ENCODE measurements at regions of chr12 and their contacts with region 1.

Region 1: DNA sequence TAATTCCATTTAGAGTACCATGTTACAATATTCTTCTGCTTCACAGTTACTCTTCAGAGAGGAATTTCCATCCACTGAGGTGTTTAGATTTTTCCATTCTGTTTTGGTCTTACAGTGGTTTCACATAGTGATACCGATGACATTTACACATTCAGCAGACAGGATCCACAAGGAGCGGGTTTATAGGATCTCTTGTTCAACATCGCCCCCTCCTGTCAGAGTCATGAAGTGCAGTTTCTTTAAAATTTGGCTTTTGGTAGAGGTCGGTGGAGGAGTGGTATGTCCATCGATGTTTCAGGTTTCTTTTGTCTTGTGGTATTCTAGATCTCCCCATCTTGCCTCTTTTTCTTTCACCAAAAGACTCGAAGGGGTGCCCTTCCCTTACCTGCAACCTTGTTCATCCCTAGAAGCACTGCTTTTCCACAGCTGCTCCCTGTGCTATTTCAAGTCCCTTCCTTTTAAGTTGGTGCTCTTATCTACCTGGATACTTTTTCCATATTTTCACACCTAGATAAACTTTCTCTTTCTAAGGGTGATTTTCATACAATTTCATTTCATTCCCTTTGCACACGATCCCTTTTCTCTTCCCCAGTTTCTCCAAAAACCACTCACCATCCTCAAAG is 181.3 kb downstream of the ITPR2 start:
- DNase-seq: peak; percentile 74
- H3K4me3 Mint-ChIP-seq: no peak overlapping the region
- H3K27ac Mint-ChIP-seq: no peak overlapping the region
- H3K4me1 Mint-ChIP-seq: peaks cover 27% of the 10 kb centered on the region
- H3K27me3 Mint-ChIP-seq: no peaks in the 10 kb centered on the region
- CTCF ChIP-seq: peak; percentile 85

Region 2: DNA sequence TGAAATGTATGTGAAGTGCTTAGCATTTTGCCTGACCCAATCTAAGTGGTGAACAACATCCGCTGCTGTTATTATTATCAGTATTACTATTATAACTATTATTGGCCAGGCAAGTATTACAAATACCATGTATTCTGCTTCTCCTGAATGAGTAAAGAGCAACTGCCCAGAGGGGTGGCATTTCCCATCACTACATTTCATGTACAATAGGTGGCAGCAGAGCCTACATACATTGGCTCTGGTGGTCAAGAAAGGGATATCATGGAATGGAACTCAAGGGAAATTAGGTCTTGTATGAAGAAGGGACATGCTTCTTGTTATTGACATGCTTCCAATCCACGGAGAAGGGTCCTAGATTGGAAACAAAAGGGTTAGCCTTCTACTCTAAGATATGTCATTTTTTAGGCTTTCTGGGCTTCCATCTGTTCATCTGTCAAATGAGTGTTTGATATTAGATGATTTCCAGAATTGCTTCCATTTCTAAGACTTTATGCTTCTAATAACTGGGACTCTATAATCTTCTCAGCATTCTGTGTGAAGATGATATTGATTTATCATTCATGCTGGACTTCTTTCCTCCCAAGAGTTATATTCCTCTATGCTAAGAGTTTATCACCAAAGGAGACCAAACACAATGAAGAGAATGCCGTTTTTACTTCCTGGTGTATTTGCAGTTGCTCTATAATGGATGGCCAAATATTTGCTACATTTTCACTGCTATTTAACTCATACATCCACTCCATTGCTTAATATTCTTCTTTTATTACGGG is 217.2 kb before region 1 on chr12:
- CTCF ChIA-PET with region 1: no interaction called
- intact Hi-C with region 1: loop called (anchors 1 kb)
- DNase-seq: peak; percentile 34
- H3K4me3 Mint-ChIP-seq: no peak overlapping the region
- H3K27ac Mint-ChIP-seq: no peak overlapping the region
- H3K4me1 Mint-ChIP-seq: peaks cover 11% of the 10 kb centered on the region
- H3K27me3 Mint-ChIP-seq: no peaks in the 10 kb centered on the region
- CTCF ChIP-seq: peak; percentile 78

Region 3: GRCh38 chr12:26455936-26456574 is 195.6 kb before region 1 on chr12:
- CTCF ChIA-PET with region 1: interaction called, 10 read pairs
- intact Hi-C with region 1: no loop called
- DNase-seq: no peak
- H3K4me3 Mint-ChIP-seq: no peak overlapping the region
- H3K27ac Mint-ChIP-seq: no peak overlapping the region
- H3K4me1 Mint-ChIP-seq: no peaks in the 10 kb centered on the region
- H3K27me3 Mint-ChIP-seq: peaks cover 17% of the 10 kb centered on the region
- CTCF ChIP-seq: no peak

Region 4: GRCh38 chr12:26629864-26630263 is 21.8 kb before region 1 on chr12:
- CTCF ChIA-PET with region 1: interaction called, 4 read pairs
- intact Hi-C with region 1: loop called (anchors 1 kb)
- DNase-seq: no peak
- H3K4me3 Mint-ChIP-seq: no peak overlapping the region
- H3K27ac Mint-ChIP-seq: no peak overlapping the region
- H3K4me1 Mint-ChIP-seq: peaks cover 12% of the 10 kb centered on the region
- H3K27me3 Mint-ChIP-seq: no peaks in the 10 kb centered on the region
- CTCF ChIP-seq: peak; percentile 16

Measured in Calu3 (cell line).